Activated T-helper 1 cell treated with anti-CD3 and anti-CD28 coated beads, Interleukin-12 subunit alpha, Interleukin-12 subunit beta, Interleukin-2, Interleukin-4 antibody, amounts not matched to agents 30 ng/mL and 10 ng/mL and 1 ng/mL, durations not matched to agents 14 hours and 24 hours and 36 hours (primary cell): ENCODE measurements at regions of chr2 and their contacts with region 1.

Region 1: DNA sequence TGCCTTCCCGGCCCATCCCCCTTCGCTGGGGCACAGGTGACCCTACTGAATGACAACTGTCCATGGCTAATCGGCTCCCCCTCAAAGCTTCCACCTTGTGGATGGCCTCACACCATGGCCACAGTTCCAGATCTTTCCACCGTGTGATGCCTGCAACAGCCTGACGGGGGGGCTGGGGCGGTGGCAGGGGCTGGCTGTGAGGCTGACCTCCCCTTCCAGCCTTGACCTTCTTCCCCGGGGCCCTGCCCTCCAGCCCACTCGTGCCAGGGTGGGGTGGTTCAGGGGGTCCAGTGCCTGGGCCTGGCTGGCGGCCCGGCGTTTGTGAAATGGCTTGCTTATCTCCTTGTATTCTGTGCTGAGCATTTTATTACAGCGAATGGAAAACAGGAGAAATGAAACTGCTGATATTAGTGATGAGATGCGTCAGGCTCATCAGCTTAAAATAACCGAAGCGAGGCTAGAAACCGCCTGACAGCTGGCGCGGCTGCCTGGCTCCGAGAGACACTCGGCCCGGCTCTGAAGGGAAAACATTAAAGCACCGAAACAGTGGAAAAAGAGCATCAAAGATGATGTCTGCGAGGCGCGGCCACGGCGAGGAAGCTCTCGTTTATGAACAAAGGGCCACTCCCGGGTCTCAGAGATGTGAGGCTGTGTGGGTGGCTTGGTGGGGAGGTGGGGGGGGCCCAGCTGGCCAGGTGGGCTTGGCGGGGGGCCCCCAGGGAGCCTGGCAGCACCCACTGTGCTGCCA is 916 bp upstream of the PDCD1 start:
- DNase-seq: peak; percentile 33
- H3K4me3 Mint-ChIP-seq: peak overlapping the region; percentile 88
- H3K27ac Mint-ChIP-seq: peak overlapping the region; percentile 99
- H3K4me1 Mint-ChIP-seq: peaks cover 57% of the 10 kb centered on the region
- H3K27me3 Mint-ChIP-seq: peaks cover under 1% of the 10 kb centered on the region

Region 2: DNA sequence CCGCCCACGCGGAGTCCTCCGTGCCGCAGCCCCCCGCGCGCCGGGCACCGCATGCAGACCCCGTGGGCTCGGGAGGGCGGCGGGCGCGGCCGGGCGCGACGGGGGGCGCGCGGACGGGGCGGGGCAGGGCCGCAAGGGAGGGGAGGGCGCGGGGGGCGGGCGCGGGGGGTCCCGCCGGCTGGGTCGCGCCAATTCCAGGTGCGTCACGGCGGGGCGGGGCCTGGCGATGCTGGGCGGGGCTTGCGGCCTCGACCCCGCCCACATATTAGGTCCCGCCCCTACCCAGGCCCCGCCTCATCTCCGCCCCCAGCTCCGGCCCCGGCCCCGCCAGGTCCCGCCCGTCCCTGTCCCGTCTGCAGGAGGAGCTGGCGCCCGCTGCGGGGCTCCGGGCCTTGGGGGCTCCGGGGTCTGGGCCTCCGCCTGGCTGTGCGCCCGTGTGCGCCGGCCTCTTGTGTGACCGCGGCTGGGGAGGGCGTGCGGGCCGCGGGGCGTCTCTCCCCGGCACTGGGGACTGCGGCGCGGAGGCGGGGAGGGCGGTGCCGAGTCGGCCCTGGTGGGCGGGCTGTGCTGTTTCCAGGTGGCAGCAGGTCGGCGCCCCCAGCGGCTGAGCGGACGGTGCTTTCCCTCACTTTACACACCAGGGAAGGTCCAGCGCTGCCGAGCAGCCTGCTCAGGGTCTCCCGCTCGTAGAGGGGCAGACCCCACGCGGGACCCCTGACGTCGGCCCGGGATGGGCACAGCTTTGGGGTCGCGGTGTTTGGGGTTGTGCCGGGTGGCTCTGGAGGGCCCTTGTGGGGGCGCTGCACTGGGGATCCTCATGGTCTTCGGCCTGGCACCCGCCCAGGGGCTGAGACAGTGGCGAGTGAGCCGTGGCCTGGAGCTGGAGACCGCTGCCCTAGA is 157.2 kb before region 1 on chr2:
- intact Hi-C with region 1: loop called (anchors 5 kb)
- DNase-seq: peak; percentile 82
- H3K4me3 Mint-ChIP-seq: peak overlapping the region; percentile 78
- H3K27ac Mint-ChIP-seq: peak overlapping the region; percentile 53
- H3K4me1 Mint-ChIP-seq: peaks cover 20% of the 10 kb centered on the region
- H3K27me3 Mint-ChIP-seq: no peaks in the 10 kb centered on the region

Region 3: DNA sequence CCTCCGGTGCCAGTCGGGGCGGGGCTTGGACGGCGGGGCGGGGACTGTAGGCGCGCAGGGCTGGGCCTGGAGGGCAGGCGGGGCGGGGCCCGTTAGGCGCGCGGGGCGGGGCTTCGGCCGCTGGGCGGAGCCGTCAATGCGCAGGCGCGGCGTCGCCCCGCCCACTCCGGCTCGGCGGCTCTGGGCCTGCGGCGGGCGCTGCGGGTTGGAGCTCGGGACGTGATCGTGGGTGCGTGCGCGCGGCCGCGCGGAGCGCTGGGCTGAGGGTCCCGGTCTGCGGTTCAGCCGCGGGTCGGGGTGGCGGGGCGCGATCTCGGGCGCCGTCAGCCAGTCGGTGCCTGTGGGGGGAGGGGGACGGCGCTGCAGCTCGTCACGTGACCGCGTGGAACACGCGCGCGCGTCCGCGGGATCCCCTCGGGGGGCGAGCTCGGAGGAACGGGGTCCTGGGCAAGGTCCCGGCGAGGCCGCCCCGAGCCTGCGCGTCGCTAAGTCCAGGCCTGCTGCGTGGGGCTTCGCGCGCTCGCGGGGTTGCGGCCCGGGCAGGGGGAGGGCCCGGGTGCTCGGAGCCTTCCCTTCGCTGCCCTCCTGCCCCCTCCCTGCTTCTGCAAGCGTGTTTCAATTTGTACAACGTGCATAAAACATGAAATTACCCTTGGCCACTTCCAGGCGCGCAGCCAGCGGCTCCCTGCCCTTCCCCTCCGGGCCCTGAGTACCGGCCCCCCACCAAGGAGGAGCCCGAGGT is 125.0 kb before region 1 on chr2 and contains the start of gene D2HGDH:
- intact Hi-C with region 1: loop called (anchors 1 kb)
- DNase-seq: peak; percentile 89
- H3K4me3 Mint-ChIP-seq: peak within 1 kb of the TSS; percentile 82
- H3K27ac Mint-ChIP-seq: no peak within 1 kb of the TSS
- H3K4me1 Mint-ChIP-seq: peaks cover 41% of the 10 kb centered on the region
- H3K27me3 Mint-ChIP-seq: peaks cover 3% of the 10 kb centered on the region
- total RNA-seq, gene D2HGDH: 27.1 and 28.7 TPM in 2 replicates

Region 4: DNA sequence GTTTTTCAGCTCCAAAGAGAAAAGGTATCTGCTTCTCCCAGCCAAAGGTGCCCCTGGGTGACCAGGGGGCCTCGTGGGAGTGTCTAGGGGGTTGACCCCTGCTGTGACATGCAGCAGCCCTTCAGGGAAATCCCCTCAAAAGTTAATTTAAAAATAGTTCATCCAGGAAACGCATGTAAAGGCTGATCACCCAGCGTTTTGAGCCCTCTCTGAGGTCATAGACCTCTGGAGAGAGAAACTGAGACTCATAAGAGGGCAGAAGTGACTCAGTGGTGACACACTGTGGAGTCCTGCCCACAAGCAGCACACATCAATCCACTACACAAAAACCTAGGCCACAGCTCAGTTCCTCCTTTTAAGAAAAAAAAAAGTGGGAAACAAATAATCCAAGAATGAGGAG is 71.0 kb before region 1 on chr2:
- intact Hi-C with region 1: loop called (anchors 5 kb)
- DNase-seq: peak; percentile 9
- H3K4me3 Mint-ChIP-seq: no peak overlapping the region
- H3K27ac Mint-ChIP-seq: peak overlapping the region; percentile 19
- H3K4me1 Mint-ChIP-seq: peaks cover 15% of the 10 kb centered on the region
- H3K27me3 Mint-ChIP-seq: no peaks in the 10 kb centered on the region

Region 5: GRCh38 chr2:241803387-241804325 is 56.0 kb before region 1 on chr2:
- intact Hi-C with region 1: loop called (anchors 5 kb)
- DNase-seq: peak; percentile 33
- H3K4me3 Mint-ChIP-seq: peak overlapping the region; percentile 56
- H3K27ac Mint-ChIP-seq: peak overlapping the region; percentile 29
- H3K4me1 Mint-ChIP-seq: peaks cover 4% of the 10 kb centered on the region
- H3K27me3 Mint-ChIP-seq: peaks cover 9% of the 10 kb centered on the region

Region 6: GRCh38 chr2:241844066-241844728 is 15.4 kb before region 1 on chr2:
- intact Hi-C with region 1: loop called (anchors 1 kb)
- DNase-seq: peak; percentile 79
- H3K4me3 Mint-ChIP-seq: peak overlapping the region; percentile 43
- H3K27ac Mint-ChIP-seq: peak overlapping the region; percentile 95
- H3K4me1 Mint-ChIP-seq: peaks cover 27% of the 10 kb centered on the region
- H3K27me3 Mint-ChIP-seq: peaks cover 8% of the 10 kb centered on the region

Region 7: GRCh38 chr2:241874277-241874925 is 14.8 kb after region 1 on chr2:
- intact Hi-C with region 1: no loop called
- DNase-seq: no peak
- H3K4me3 Mint-ChIP-seq: no peak overlapping the region
- H3K27ac Mint-ChIP-seq: no peak overlapping the region
- H3K4me1 Mint-ChIP-seq: no peaks in the 10 kb centered on the region
- H3K27me3 Mint-ChIP-seq: no peaks in the 10 kb centered on the region

Region 8: DNA sequence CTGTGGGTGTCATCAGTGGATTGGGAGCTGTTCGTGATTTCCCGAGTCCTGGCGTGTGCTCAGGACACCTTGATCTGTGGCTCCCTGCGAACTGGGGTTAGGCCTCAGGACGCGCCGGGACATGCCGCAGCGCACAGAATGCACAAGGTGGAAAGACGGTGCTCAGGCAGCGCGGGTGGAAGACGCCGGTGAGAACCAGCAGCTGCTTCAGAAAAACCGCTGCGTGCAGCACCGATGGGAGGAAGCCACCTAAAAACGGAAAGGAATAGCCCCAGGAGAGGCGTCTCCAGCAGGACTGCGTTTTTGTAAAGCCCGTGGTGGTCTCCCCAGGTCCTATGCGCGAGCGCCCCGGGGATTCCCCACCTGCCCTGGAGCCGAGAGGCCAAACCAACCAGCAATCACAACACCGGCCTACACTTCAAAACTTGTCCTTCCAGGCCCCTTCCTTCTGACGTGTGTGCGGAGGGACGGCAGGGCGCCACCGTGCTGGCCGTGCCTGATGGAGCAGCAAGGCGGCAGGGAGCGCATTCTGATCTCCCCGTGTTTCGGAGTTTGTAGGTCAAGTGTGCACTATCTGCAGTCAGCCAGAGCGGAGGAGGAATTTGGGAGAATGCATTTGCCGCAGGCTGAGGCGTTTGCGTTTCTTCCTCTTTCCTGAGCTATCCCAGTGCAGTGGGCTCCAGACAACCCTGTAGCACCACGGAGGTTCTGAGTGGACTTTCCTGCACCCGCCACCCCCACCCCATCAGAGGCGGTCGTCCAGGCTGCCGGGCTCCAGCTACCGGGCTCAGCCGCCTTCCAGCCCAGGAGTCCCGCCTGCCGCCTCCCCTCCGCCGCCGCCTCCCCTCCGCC is 42.1 kb after region 1 on chr2:
- intact Hi-C with region 1: no loop called
- DNase-seq: no peak
- H3K4me3 Mint-ChIP-seq: no peak overlapping the region
- H3K27ac Mint-ChIP-seq: no peak overlapping the region
- H3K4me1 Mint-ChIP-seq: no peaks in the 10 kb centered on the region
- H3K27me3 Mint-ChIP-seq: peaks cover 1% of the 10 kb centered on the region

Region 9: DNA sequence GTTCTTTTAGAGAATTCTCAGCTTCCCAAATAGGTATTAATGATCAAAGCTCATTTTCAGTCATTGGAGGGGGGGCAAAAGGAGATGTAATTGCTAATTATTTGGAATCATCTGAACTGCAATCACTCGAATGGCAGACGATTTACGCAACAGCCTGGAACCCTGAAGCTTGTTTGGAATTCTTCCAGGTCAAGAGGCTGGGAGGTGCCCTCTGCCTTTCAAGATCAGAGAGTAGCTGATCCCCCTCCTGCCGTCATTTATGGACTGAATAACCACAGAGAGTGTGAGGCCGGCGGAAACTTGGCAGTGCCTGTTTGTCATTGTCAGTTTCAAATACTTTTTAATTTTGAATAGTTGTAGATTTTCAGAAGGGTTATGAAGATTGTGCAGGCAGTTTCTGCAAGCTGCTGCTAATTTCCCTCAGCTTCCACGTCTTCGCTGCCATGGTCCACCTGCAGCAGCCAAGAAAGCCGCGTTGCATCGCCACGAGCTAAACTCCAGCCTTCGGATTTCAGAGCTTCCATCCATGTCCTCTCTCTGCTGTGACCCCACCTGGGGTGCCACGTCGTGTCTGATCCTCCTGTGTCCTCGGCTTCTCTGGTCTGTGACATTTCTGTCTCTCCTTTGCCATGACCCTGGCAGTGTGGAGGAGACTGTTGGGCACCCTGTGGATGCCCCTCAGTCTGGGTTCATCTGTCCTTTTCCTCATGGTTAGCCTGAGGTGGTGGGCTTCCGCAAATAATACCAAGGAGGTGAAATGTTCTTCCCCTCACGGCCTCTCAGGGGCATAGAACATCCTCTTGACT is 116.5 kb after region 1 on chr2:
- intact Hi-C with region 1: no loop called
- DNase-seq: no peak
- H3K4me3 Mint-ChIP-seq: no peak overlapping the region
- H3K27ac Mint-ChIP-seq: no peak overlapping the region
- H3K4me1 Mint-ChIP-seq: no peaks in the 10 kb centered on the region
- H3K27me3 Mint-ChIP-seq: no peaks in the 10 kb centered on the region

Region 10: GRCh38 chr2:242063364-242064249 is 204.0 kb after region 1 on chr2:
- intact Hi-C with region 1: no loop called
- DNase-seq: no peak
- H3K4me3 Mint-ChIP-seq: no peak overlapping the region
- H3K27ac Mint-ChIP-seq: no peak overlapping the region
- H3K4me1 Mint-ChIP-seq: no peaks in the 10 kb centered on the region
- H3K27me3 Mint-ChIP-seq: no peaks in the 10 kb centered on the region